Activated CD4-positive, alpha-beta memory T cell treated with anti-CD3 and anti-CD28 coated beads for 36 hours (primary cell): ENCODE measurements at regions of chr12 and their contacts with region 1.

Region 1: GRCh38 chr12:3752741-3753486 is at the start of gene CRACR2A:
- DNase-seq: peak; percentile 89
- H3K4me3 Mint-ChIP-seq: peak within 1 kb of the TSS; percentile 89
- H3K27ac Mint-ChIP-seq: peak within 1 kb of the TSS; percentile 93
- H3K4me1 Mint-ChIP-seq: peaks cover 51% of the 10 kb centered on the region
- H3K27me3 Mint-ChIP-seq: no peaks in the 10 kb centered on the region
- total RNA-seq, gene CRACR2A: 15.8 to 19.1 TPM

Region 2: DNA sequence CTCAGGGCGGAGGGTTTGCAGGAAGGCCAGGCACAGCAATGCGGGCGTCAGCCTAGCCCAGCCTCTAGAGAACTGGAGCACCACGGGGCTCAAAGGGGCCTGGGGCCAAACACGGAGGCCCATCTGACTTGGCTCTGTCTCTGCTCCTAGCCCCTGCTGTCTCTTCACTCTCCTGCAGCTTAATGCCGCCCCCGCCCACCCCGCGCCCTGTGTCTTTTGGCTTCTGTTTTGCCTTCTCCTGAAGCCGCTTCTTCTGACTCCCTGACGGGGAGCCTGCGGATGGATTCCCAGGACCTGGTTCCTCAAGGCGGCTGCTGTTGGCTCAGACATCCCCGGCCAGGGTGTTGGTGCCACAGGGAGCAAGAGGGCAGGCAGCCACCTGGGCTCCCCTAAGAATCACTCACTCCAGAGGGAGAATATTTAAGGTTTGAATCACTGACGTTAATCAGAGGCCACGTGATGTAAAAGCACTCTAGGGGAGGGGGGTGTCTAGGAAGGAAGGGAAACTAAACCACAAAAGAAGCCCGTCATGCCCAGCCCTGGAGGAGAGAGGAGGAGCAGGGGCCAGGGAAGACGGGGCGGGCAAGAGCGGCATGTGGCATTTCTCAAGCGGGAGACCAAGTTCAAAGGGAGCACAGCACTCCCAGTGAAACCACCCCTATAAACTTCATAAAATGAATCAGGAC is 298.8 kb before region 1 on chr12:
- CTCF ChIA-PET with region 1: no interaction called
- POLR2A ChIA-PET with region 1: no interaction called
- intact Hi-C with region 1: no loop called
- DNase-seq: no peak
- H3K4me3 Mint-ChIP-seq: no peak overlapping the region
- H3K27ac Mint-ChIP-seq: no peak overlapping the region
- H3K4me1 Mint-ChIP-seq: peaks cover 9% of the 10 kb centered on the region
- H3K27me3 Mint-ChIP-seq: peaks cover 35% of the 10 kb centered on the region

Region 3: GRCh38 chr12:3872800-3873636 is 120.1 kb after region 1 on chr12 and contains the start of gene PARP11:
- CTCF ChIA-PET with region 1: no interaction called
- POLR2A ChIA-PET with region 1: no interaction called
- intact Hi-C with region 1: loop called (anchors 5 kb)
- DNase-seq: peak; percentile 98
- H3K4me3 Mint-ChIP-seq: peak within 1 kb of the TSS; percentile 91
- H3K27ac Mint-ChIP-seq: peak within 1 kb of the TSS; percentile 97
- H3K4me1 Mint-ChIP-seq: peaks cover 46% of the 10 kb centered on the region
- H3K27me3 Mint-ChIP-seq: no peaks in the 10 kb centered on the region
- total RNA-seq, gene PARP11: 16.6 to 17.8 TPM

Region 4: GRCh38 chr12:4320853-4321701 is 568.2 kb after region 1 on chr12 and contains the start of gene TIGAR:
- CTCF ChIA-PET with region 1: no interaction called
- POLR2A ChIA-PET with region 1: no interaction called
- intact Hi-C with region 1: loop called (anchors 2 kb)
- DNase-seq: peak; percentile 94
- H3K4me3 Mint-ChIP-seq: peak within 1 kb of the TSS; percentile 94
- H3K27ac Mint-ChIP-seq: peak within 1 kb of the TSS; percentile 87
- H3K4me1 Mint-ChIP-seq: peaks cover 34% of the 10 kb centered on the region
- H3K27me3 Mint-ChIP-seq: no peaks in the 10 kb centered on the region
- total RNA-seq, gene TIGAR: 12.0 to 13.6 TPM

Region 5: GRCh38 chr12:4356041-4356327 is 603.1 kb after region 1 on chr12:
- CTCF ChIA-PET with region 1: no interaction called
- POLR2A ChIA-PET with region 1: no interaction called
- intact Hi-C with region 1: no loop called
- DNase-seq: peak; percentile 79
- H3K4me3 Mint-ChIP-seq: no peak overlapping the region
- H3K27ac Mint-ChIP-seq: no peak overlapping the region
- H3K4me1 Mint-ChIP-seq: peaks cover 3% of the 10 kb centered on the region
- H3K27me3 Mint-ChIP-seq: no peaks in the 10 kb centered on the region